Ascending aorta (tissue), 2 donors: ENCODE measurements at regions of chr10 and their contacts with region 1.

Region 1: DNA sequence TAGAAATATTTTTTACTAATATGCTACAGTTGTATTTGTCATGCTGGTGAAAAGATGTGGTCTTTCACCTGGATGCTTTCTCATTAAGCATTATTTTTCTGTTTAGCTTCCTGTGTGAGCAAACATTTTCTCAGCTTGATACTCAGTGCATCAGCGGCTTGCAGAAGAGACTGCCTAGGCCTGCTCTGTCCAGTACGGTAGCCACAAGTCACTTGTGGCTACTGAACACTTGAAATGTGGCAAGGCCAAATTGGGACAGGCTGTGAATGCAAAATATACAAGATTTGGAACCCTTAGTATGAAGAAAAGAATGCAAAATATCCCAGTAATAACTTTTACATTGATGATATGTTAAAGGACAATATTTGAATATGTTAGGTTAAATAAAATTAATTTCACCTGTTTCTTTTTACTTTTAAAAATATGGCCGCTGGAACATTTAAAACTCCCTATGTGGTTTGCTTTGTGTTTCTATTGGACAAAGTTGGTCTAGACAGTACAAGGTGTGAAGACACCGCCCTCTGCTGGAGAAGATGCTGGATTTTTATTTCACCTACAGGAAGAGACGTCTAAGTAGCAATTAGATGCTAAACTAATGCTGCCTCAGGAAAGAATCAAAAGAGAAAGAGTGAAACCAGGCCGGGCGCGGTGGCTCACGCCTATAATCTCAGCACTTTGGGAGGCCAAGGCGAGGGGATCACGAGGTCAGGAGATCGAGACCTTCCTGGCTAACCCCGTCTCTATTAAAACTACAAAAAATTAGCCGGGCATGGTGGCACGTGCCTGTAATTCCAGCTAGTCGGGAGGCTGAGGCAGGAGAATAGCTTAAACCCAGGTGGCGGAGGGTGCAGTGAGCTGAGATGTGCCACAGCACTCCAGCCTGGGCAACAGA is 5.3 kb downstream of the SRGN start:
- DNase-seq: peak in 1 of 2 donors; percentile 93
- H3K4me3 ChIP-seq: peak overlapping the region in 1 of 2 donors; percentile 65
- H3K27ac ChIP-seq: peak overlapping the region in 1 of 2 donors; percentile 9
- H3K4me1 ChIP-seq: peaks cover 0 to 4% of the 10 kb centered on the region in 2 donors
- H3K27me3 ChIP-seq: no peaks in the 10 kb centered on the region
- CTCF ChIP-seq: peak; percentile 77 to 81 (median 81)

Region 2: DNA sequence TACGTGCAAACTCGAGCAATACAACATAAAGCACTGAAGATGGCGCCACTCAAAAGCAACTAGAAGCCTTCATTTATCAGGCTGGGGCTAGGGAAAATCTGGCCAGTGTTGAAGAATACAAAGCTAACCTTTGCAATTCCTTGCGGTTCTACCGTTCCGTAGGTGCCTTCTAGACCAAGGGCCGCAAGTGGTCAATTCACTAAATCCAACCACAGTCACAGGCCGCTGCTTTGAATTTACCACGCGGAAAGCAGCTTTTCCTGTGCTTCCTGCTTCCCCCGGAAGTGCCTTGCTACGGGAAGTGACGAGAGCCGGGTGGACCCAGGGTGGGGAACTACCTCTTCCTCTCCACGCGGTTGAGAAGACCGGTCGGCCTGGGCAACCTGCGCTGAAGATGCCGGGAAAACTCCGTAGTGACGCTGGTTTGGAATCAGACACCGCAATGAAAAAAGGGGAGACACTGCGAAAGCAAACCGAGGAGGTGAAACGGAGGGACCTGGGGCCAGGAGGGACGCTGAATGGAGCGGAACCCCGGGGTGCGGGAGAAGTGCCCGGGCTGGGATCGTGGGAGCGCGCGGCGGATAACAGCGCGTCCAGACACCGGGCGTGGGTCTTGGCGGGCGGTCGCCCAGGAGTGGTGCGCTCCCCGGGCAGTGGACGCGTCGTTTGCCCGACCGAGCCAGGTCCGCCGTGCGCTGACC is 137.2 kb before region 1 on chr10 and contains the start of gene DDX21:
- intact Hi-C with region 1: loop called (anchors 2 kb)
- DNase-seq: peak; percentile 51 to 95
- H3K4me3 ChIP-seq: peak within 1 kb of the TSS; percentile 84 to 88
- H3K27ac ChIP-seq: peak within 1 kb of the TSS; percentile 85 to 92
- H3K4me1 ChIP-seq: peaks cover 6 to 17% of the 10 kb centered on the region in 2 donors
- H3K27me3 ChIP-seq: no peaks in the 10 kb centered on the region
- CTCF ChIP-seq: peak; percentile 57 to 72 (median 62)
- total RNA-seq, gene DDX21: 26.5 TPM

Region 3: GRCh38 chr10:69004821-69005220 is 88.4 kb before region 1 on chr10:
- intact Hi-C with region 1: loop called (anchors 1 kb)
- DNase-seq: no peak
- H3K4me3 ChIP-seq: no peak overlapping the region
- H3K27ac ChIP-seq: no peak overlapping the region
- H3K4me1 ChIP-seq: peaks cover 0 to 4% of the 10 kb centered on the region in 2 donors
- H3K27me3 ChIP-seq: no peaks in the 10 kb centered on the region
- CTCF ChIP-seq: peak; percentile 34 to 50 (median 34)

Region 4: DNA sequence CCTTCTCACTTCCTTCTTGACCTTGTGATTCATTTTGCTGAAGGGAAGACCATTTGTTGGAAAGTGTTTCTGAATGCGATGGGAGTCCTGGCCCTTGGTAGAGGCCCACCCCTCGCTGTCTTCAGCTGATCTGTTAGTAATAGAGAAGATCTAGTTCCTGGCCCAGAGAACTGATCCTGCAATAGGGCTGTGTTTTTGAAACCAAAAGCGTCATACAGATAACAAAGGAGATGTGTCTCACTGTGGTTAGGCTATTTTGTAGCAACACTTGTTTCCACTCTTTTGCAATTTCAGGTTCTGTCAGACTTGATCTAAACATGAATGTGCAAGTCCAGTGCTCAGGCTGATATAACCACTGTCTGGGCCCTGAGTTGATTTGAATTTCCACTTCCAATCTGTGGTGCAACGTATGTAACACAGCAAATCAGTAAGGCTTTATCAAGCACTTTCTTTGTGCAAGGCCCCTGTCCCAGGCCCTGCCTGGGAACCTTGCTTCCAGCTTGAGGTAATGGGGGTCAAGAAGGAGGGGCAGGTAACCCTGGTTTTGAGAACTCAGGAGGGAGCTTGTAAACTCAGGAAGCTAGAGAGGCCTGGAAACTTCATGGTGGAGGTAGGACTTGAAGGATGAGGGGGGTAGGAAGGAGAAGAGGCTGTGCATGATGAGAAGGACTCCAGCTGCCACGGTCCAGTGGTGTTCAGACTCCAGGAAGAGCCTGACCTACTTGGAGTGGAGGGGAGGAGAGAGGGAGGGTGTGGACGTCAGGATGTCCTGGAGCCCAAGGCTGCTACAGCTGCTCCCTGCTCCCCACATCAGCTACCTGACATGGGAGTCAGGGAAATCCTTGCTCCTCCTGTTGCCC is 47.5 kb before region 1 on chr10:
- intact Hi-C with region 1: no loop called
- DNase-seq: no peak
- H3K4me3 ChIP-seq: no peak overlapping the region
- H3K27ac ChIP-seq: peak overlapping the region in 1 of 2 donors; percentile 12
- H3K4me1 ChIP-seq: no peaks in the 10 kb centered on the region
- H3K27me3 ChIP-seq: no peaks in the 10 kb centered on the region
- CTCF ChIP-seq: no peak